ENCODE measurements at regions of chr9 and their contacts with region 1.

Region 1: GRCh38 chr9:17802249-17802857 is 223.5 kb downstream of the SH3GL2 start:
- DNase-seq: no peak
- ATAC-seq: peak; percentile 53
- H3K4me3 ChIP-seq: no peak overlapping the region
- H3K27ac ChIP-seq: no peak overlapping the region
- H3K4me1 ChIP-seq: no peaks in the 10 kb centered on the region
- H3K27me3 ChIP-seq: no peaks in the 10 kb centered on the region
- CTCF ChIP-seq: peak in 1 of 2 donors; percentile 18

Region 2: GRCh38 chr9:17536027-17536426 is 266.3 kb before region 1 on chr9:
- intact Hi-C with region 1: loop called in 1 of 2 experiments (anchors 5 kb)
- DNase-seq: no peak
- ATAC-seq: no peak
- H3K4me3 ChIP-seq: no peak overlapping the region
- H3K27ac ChIP-seq: no peak overlapping the region
- H3K4me1 ChIP-seq: no peaks in the 10 kb centered on the region
- H3K27me3 ChIP-seq: no peaks in the 10 kb centered on the region
- CTCF ChIP-seq: no peak

Region 3: DNA sequence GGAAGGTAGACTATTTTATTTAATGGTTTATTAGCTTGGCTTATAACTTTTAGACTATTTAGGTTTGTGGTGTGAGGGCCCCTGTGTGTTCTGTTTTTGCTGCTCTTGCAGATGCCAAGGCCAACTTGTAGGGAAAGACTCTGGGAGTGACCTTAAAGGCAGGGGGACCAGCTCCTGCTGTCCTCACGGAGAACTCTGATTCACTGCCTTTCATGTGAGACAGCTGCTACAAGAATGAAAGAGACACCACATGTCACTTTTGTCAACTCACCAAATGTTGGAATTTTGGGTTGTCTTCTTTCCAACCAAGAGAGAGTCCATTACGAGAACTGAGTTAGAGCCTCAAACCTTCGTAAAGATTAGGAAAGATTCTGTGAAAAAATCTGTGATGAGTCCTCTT is 413.3 kb after region 1 on chr9:
- intact Hi-C with region 1: loop called in 1 of 2 experiments (anchors 10 kb)
- DNase-seq: no peak
- ATAC-seq: no peak
- H3K4me3 ChIP-seq: no peak overlapping the region
- H3K27ac ChIP-seq: no peak overlapping the region
- H3K4me1 ChIP-seq: no peaks in the 10 kb centered on the region
- H3K27me3 ChIP-seq: no peaks in the 10 kb centered on the region
- CTCF ChIP-seq: no peak